CD8-positive, alpha-beta T cell (primary cell): ENCODE measurements at regions of chr22 and their contacts with region 1.

Region 1: GRCh38 chr22:40024201-40025061 is 29.7 kb downstream of the FAM83F start:
- DNase-seq: peak; percentile 20 to 78 (median 64)
- ATAC-seq: peak; percentile 72
- H3K4me3 ChIP-seq: no peak overlapping the region
- H3K4me3 Mint-ChIP-seq: no peak overlapping the region
- H3K27ac ChIP-seq: no peak overlapping the region
- H3K27ac Mint-ChIP-seq: no peak overlapping the region
- H3K4me1 ChIP-seq: peaks cover 6% of the 10 kb centered on the region
- H3K4me1 Mint-ChIP-seq: peaks cover 5% of the 10 kb centered on the region
- H3K27me3 ChIP-seq: no peaks in the 10 kb centered on the region
- H3K27me3 Mint-ChIP-seq: no peaks in the 10 kb centered on the region
- CTCF ChIP-seq: peak; percentile 80

Region 2: DNA sequence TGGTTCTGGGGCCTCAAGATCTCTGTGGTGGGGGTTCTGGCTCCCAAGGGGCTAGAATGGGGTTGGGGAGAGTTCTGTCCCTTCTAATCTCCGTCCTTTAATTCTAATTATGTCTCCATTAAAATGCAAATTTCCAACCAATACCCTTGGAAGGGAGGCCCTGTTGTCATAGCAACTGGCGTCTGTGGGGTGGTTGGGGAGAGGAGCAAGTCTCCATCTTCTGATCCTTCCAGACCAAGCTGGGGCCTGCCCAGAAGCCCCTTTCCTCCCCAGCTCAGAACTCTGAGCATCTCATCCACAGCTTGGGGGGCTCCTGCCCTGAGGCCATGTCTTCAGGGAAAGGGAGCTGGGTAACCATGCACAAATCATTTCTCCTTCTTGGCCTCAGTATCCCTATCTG is 486.5 kb before region 1 on chr22:
- CTCF ChIA-PET with region 1: interaction called, 132 read pairs
- POLR2A ChIA-PET with region 1: interaction called, 8 read pairs
- intact Hi-C with region 1: loop called in 1 of 2 experiments (anchors 1 kb)
- DNase-seq: no peak
- ATAC-seq: no peak
- H3K4me3 ChIP-seq: no peak overlapping the region
- H3K4me3 Mint-ChIP-seq: no peak overlapping the region
- H3K27ac ChIP-seq: no peak overlapping the region
- H3K27ac Mint-ChIP-seq: no peak overlapping the region
- H3K4me1 ChIP-seq: peaks cover 9% of the 10 kb centered on the region
- H3K4me1 Mint-ChIP-seq: peaks cover 6% of the 10 kb centered on the region
- H3K27me3 ChIP-seq: no peaks in the 10 kb centered on the region
- H3K27me3 Mint-ChIP-seq: peaks cover under 1% of the 10 kb centered on the region
- CTCF ChIP-seq: no peak

Region 3: DNA sequence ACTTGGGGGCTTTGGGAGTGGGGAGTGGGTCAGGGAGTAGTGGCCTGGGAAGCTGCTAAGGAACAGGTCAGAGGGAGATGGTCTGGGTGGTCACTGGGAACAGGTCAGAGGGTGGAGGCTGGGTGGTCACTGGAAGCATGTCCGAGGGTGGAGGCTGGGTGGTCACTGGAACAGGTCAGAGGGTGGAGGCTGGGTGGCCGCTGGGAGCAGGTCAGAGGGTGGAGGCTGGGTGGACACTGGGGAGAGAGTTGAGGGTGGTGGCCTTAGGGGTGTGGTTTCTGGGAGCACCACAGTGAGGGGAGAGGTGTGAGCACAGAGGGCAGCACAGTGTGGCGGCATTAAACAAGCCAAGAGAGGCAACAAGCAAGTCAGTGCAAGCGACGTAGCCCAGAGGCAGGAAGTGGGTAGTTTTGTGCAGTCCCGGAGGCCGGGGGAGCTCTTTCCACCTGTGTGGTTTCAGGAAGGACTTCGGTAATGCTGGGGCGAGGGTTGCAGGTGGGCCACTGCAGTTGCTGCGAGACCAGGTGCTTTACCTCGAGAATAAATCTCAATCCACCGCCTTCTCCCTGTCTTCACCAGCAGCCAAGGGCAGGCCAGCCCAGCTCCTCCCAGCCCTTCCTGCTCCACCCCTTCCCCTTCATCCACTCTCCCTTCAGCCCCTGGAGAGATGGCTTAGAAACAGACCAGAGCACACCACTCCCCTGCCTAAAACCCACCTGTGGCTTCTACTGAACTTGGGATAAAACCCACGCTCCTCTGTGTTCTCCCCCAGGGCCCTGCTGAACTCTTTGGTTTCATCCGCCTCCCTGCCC is 457.1 kb before region 1 on chr22:
- CTCF ChIA-PET with region 1: interaction called, 10 read pairs
- POLR2A ChIA-PET with region 1: no interaction called
- intact Hi-C with region 1: no loop called
- DNase-seq: peak in 8 of 9 experiments; percentile 26 to 77 (median 46)
- ATAC-seq: peak; percentile 83
- H3K4me3 ChIP-seq: peak overlapping the region in 1 of 2 experiments; percentile 33
- H3K4me3 Mint-ChIP-seq: peak overlapping the region; percentile 46
- H3K27ac ChIP-seq: peak overlapping the region in 1 of 2 experiments; percentile 46
- H3K27ac Mint-ChIP-seq: peak overlapping the region; percentile 11
- H3K4me1 ChIP-seq: peaks cover 14% of the 10 kb centered on the region
- H3K4me1 Mint-ChIP-seq: peaks cover 17% of the 10 kb centered on the region
- H3K27me3 ChIP-seq: peaks cover 0 to 5% of the 10 kb centered on the region in 2 experiments
- H3K27me3 Mint-ChIP-seq: no peaks in the 10 kb centered on the region
- CTCF ChIP-seq: no peak

Region 4: DNA sequence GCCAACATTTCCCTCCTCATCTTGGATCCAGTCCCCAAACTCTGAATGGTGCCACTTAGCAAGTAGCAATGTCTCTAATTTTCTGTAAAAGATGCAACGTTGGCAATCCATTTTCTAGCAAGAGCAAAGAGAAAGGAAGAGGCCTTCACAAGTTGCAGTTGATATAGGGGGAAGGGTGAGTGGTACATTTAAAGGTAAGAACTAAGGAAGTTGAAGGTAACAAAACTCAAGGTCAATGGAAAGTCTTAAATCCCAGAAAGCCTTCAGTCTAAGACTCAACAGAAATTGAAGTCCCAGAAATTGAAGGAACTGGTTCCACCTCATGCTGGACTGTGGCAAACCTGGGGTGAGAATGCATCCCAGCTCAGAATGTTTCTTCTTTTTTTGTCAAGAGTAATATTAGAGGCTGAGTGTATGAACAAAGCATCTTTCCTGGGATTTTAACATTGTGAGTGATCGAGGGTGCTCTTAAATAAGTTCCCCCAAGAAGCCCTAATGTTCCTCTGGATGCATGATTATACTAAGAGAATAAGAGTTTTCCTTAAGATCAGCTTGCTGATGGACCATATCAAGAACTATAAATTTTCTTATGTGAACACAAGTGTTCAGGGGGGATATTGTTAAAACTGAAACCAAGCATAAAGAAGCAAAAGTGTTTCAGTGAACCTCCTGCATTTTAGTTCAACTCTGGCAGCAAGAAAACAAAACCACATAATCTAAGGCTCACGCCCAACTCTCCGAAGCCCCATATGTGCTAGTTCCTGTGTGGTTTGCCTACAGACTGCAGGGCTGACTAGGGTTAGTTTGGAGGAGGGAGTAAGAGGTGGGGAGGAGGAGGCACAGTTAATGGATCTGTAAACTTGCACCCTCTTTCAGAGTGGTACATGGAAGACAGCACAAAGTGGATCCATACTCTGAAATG is 123.9 kb before region 1 on chr22 and contains the start of gene GRAP2:
- CTCF ChIA-PET with region 1: interaction called, 110 read pairs
- POLR2A ChIA-PET with region 1: interaction called, 3 read pairs
- intact Hi-C with region 1: loop called in 1 of 2 experiments (anchors 1 kb)
- DNase-seq: peak; percentile 49 to 93 (median 74)
- ATAC-seq: peak; percentile 92
- H3K4me3 ChIP-seq: peak within 1 kb of the TSS; percentile 77 to 80
- H3K4me3 Mint-ChIP-seq: peak within 1 kb of the TSS; percentile 97
- H3K27ac ChIP-seq: peak within 1 kb of the TSS; percentile 71 to 80
- H3K27ac Mint-ChIP-seq: peak within 1 kb of the TSS; percentile 91
- H3K4me1 ChIP-seq: peaks cover 42% of the 10 kb centered on the region
- H3K4me1 Mint-ChIP-seq: peaks cover 27% of the 10 kb centered on the region
- H3K27me3 ChIP-seq: no peaks in the 10 kb centered on the region
- H3K27me3 Mint-ChIP-seq: no peaks in the 10 kb centered on the region
- CTCF ChIP-seq: no peak
- total RNA-seq, gene GRAP2: 105 TPM

Region 5: GRCh38 chr22:39940757-39941305 is 83.6 kb before region 1 on chr22:
- CTCF ChIA-PET with region 1: interaction called, 27 read pairs
- POLR2A ChIA-PET with region 1: no interaction called
- intact Hi-C with region 1: loop called in 1 of 2 experiments (anchors 2 kb)
- DNase-seq: peak in 2 of 9 experiments; percentile 78 to 87
- ATAC-seq: peak; percentile 49
- H3K4me3 ChIP-seq: peak overlapping the region in 1 of 2 experiments; percentile 40
- H3K4me3 Mint-ChIP-seq: peak overlapping the region; percentile 56
- H3K27ac ChIP-seq: peak overlapping the region; percentile 22 to 76
- H3K27ac Mint-ChIP-seq: no peak overlapping the region
- H3K4me1 ChIP-seq: peaks cover 98% of the 10 kb centered on the region
- H3K4me1 Mint-ChIP-seq: peaks cover 92% of the 10 kb centered on the region
- H3K27me3 ChIP-seq: no peaks in the 10 kb centered on the region
- H3K27me3 Mint-ChIP-seq: no peaks in the 10 kb centered on the region
- CTCF ChIP-seq: peak; percentile 62

Region 6: DNA sequence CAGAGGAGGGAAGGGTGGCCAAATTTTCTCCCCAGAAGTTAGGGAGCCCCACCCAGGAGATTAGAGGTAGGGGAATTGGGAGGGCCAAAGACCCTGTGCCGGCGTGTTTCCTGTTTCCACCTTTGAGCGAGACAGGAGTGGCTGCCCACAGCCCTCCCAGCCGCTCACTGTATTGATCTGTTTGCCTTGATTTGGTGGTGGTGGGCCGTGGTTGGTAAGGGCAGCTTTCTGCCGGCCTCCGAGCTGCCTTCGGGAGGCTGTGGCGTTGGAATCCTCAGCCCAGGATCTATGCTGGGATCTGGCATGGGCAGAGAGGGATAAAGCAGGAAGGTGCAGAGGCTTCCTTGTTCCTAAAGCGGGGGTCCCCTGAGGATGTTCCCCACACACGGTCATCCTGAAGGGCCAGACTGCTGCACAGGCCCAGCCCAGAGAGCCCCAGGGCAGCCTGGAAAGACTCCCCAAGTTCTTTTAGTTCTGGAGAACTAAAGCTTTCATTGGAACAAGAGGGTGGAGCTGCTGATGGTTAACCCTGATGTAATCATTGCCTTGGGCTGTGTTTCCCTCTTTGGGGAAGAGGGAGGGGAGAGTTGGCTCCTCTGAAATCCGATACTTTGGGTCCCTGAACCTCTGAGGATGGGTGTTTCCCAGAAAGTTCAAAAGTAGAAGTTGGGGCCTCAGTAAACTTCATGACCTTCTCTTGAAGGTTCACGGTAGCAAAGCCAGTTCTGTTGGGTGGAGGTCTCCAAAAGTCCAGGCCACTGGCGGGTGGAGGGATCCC is 22.4 kb before region 1 on chr22:
- CTCF ChIA-PET with region 1: interaction called, 11 read pairs
- POLR2A ChIA-PET with region 1: no interaction called
- intact Hi-C with region 1: no loop called
- DNase-seq: no peak
- ATAC-seq: no peak
- H3K4me3 ChIP-seq: no peak overlapping the region
- H3K4me3 Mint-ChIP-seq: no peak overlapping the region
- H3K27ac ChIP-seq: no peak overlapping the region
- H3K27ac Mint-ChIP-seq: no peak overlapping the region
- H3K4me1 ChIP-seq: no peaks in the 10 kb centered on the region
- H3K4me1 Mint-ChIP-seq: no peaks in the 10 kb centered on the region
- H3K27me3 ChIP-seq: no peaks in the 10 kb centered on the region
- H3K27me3 Mint-ChIP-seq: peaks cover 4% of the 10 kb centered on the region
- CTCF ChIP-seq: no peak